Calu3 (cell line): ENCODE measurements at regions of chr3 and their contacts with region 1.

Region 1: GRCh38 chr3:195337747-195338146 is 66.8 kb upstream of the XXYLT1 start:
- DNase-seq: no peak
- H3K4me3 Mint-ChIP-seq: no peak overlapping the region
- H3K27ac Mint-ChIP-seq: no peak overlapping the region
- H3K4me1 Mint-ChIP-seq: no peaks in the 10 kb centered on the region
- H3K27me3 Mint-ChIP-seq: no peaks in the 10 kb centered on the region
- CTCF ChIP-seq: no peak

Region 2: DNA sequence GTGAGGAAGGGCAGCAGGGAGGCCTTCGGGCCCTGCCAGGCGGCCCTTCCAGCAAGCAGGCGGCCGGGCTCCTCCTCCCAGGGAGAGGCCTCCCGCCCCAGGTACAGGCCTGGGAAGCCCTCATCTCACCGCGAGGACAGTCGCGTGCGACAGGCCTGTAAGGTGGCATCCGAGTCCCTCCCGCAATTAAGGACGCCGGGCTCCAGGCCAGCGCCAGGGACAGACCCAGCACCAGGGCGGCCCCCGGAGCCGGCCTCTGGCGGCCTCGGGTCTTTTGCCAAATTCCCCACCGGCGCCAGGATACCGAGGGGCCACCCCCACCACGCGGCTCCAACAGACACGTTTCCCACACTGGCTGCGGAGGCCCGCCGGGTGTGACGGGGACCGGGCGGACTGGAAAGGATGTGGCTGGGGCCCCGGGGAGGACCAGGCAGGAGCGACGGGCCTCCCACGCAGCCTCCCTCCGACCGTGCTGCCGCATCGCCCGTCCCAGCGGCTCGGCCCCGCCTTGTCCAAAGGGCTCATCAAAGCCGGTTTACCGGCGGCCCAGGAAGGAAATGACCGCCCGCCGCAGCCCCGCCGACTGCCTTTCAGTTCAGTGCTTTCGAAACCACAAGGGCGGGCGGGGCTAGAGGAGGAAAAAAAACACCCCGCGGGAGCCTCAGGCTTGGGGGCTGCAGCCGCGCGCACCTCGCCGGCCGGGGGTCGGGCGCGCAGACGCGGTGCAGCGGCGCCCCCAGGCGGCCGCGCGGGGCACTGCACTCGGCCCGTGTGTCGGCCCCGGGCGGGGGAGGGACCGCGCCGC is 78.1 kb before region 1 on chr3:
- CTCF ChIA-PET with region 1: no interaction called
- intact Hi-C with region 1: no loop called
- DNase-seq: peak; percentile 96
- H3K4me3 Mint-ChIP-seq: peak overlapping the region; percentile 77
- H3K27ac Mint-ChIP-seq: no peak overlapping the region
- H3K4me1 Mint-ChIP-seq: no peaks in the 10 kb centered on the region
- H3K27me3 Mint-ChIP-seq: no peaks in the 10 kb centered on the region
- CTCF ChIP-seq: peak; percentile 96

Region 3: GRCh38 chr3:195319060-195319459 is 18.7 kb before region 1 on chr3:
- CTCF ChIA-PET with region 1: no interaction called
- intact Hi-C with region 1: loop called (anchors 1 kb)
- DNase-seq: no peak
- H3K4me3 Mint-ChIP-seq: no peak overlapping the region
- H3K27ac Mint-ChIP-seq: no peak overlapping the region
- H3K4me1 Mint-ChIP-seq: no peaks in the 10 kb centered on the region
- H3K27me3 Mint-ChIP-seq: no peaks in the 10 kb centered on the region
- CTCF ChIP-seq: no peak

Region 4: DNA sequence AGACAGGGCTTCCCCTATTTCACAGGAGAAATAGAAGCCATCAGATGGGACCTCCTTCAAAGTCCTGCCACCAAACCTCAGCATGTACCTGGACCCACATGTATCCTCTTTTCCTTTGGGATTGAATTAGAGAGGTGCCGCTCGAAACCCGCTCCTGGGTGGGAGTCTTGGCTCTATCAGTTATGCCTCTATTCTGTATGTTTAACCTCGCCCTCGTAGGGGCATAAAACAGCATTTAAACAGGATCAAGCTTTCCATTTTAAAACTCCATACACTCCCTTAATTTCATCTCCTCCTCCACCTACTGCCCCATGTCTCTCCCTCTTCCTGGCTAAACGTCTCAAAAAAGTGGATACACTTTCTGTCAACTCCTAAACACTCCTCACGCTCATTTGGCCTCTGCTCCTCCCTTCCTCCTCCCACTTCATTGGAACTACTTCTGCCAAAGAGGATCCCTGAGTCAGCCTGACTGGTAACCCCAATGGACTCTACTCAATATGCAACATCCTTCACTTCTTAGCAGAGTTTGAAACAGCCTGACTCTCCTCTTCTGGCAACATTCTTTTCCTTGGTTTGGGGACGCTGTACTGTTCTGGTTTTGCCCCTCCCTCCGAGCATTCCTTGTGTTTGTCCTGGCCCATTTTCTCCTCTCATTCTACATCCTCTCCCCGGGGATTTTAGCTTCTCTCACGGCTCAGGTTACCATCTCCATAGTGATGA is 360.0 kb after region 1 on chr3:
- CTCF ChIA-PET with region 1: no interaction called
- intact Hi-C with region 1: no loop called
- DNase-seq: no peak
- H3K4me3 Mint-ChIP-seq: no peak overlapping the region
- H3K27ac Mint-ChIP-seq: peak overlapping the region; percentile 1
- H3K4me1 Mint-ChIP-seq: peaks cover 18% of the 10 kb centered on the region
- H3K27me3 Mint-ChIP-seq: no peaks in the 10 kb centered on the region
- CTCF ChIP-seq: no peak